Naive thymus-derived CD4-positive, alpha-beta T cell (primary cell): ENCODE measurements at regions of chr21 and their contacts with region 1.

Region 1: DNA sequence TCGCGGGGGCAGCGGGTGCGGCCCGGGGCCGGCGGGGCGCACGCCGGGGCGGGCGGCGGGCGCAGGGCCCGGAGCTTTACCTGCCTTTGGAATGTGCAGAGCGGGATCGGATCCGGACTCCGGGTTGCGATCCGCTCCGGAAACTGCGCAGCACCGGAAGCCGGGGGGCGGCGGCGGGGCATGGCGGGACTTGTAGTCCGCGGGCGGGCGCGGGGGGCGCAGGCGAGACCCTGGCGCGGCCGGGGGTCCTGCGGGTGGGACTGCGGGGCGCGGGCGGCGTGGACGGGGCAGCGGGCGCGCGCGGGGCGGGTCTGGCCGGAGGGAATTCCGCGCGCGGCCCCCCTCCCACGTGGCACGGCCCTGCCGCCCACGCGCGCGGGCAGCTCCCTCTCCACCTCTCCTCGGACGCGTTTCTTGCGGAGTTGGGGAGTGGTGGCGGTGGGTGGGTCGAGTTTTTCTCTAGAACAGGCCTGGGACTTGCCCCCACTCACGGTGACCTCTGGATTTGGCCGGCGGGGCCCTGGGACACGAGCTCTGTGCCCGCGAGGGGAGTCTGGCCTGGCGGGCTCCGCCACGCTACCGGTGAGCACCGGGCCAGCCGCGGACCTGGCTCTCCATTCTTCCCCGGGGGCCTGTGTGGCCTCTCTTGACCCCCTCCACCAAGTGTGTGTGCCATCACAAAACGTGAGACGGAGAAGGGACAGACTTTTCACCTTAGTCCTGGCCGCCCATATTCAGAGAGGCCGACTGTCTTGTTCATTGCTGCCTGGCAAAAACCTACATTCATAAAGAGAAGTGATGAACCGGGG is at the start of gene PRDM15:
- DNase-seq: peak; percentile 69 to 88 (median 77)
- ATAC-seq: peak; percentile 85
- H3K4me3 ChIP-seq: peak within 1 kb of the TSS; percentile 84
- H3K4me3 Mint-ChIP-seq: peak within 1 kb of the TSS; percentile 88 to 95 (median 92)
- H3K27ac ChIP-seq: peak within 1 kb of the TSS; percentile 85
- H3K27ac Mint-ChIP-seq: peak within 1 kb of the TSS; percentile 92 to 97 (median 95)
- H3K4me1 ChIP-seq: peaks cover 9 to 16% of the 10 kb centered on the region in 2 donors
- H3K4me1 Mint-ChIP-seq: peaks cover 20 to 35% (median 29%) of the 10 kb centered on the region in 7 donors
- H3K27me3 ChIP-seq: no peaks in the 10 kb centered on the region
- H3K27me3 Mint-ChIP-seq: no peaks in the 10 kb centered on the region
- total RNA-seq, gene PRDM15: 10.0 to 20.1 (median 15.9) TPM

Region 2: GRCh38 chr21:41361786-41362604 is 517.4 kb before region 1 on chr21 and contains the start of gene MX2:
- CTCF ChIA-PET with region 1: no interaction called
- POLR2A ChIA-PET with region 1: no interaction called
- intact Hi-C with region 1: loop called in 1 of 2 experiments (anchors 10 kb)
- DNase-seq: peak; percentile 64 to 96 (median 94)
- ATAC-seq: peak; percentile 86
- H3K4me3 ChIP-seq: peak within 1 kb of the TSS; percentile 84
- H3K4me3 Mint-ChIP-seq: peak within 1 kb of the TSS; percentile 90 to 98 (median 96)
- H3K27ac ChIP-seq: peak within 1 kb of the TSS; percentile 96
- H3K27ac Mint-ChIP-seq: peak within 1 kb of the TSS; percentile 99 to 100 (median 100)
- H3K4me1 ChIP-seq: peaks cover 21 to 38% of the 10 kb centered on the region in 2 donors
- H3K4me1 Mint-ChIP-seq: peaks cover 31 to 67% (median 60%) of the 10 kb centered on the region in 7 donors
- H3K27me3 ChIP-seq: no peaks in the 10 kb centered on the region
- H3K27me3 Mint-ChIP-seq: no peaks in the 10 kb centered on the region
- total RNA-seq, gene MX2: 84.8 to 116 (median 100) TPM

Region 3: DNA sequence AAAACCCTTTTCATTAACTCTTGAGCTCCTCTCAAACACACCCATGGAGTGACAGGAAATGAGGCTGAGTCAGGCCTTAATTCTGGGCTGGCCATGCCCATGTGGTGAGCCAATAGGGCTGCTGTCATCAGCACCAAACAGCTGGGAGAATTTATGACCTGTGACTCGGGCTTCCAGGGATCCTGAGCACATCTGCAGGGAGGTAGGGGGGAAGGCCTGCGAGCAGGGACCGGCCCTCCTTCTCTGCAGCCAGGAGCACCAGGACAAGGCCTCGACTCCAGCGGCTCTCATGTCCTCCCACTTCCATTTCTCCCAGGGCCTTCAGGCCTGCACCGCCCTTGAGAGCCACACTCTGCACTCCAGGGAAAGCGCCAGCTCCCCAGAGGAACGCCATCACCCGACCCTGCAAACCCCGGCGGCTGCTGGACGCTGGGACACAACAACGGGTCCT is 127.1 kb before region 1 on chr21:
- CTCF ChIA-PET with region 1: no interaction called
- POLR2A ChIA-PET with region 1: no interaction called
- intact Hi-C with region 1: no loop called
- DNase-seq: no peak
- ATAC-seq: no peak
- H3K4me3 ChIP-seq: no peak overlapping the region
- H3K4me3 Mint-ChIP-seq: no peak overlapping the region
- H3K27ac ChIP-seq: no peak overlapping the region
- H3K27ac Mint-ChIP-seq: no peak overlapping the region
- H3K4me1 ChIP-seq: no peaks in the 10 kb centered on the region
- H3K4me1 Mint-ChIP-seq: no peaks in the 10 kb centered on the region
- H3K27me3 ChIP-seq: no peaks in the 10 kb centered on the region
- H3K27me3 Mint-ChIP-seq: no peaks in the 10 kb centered on the region

Region 4: DNA sequence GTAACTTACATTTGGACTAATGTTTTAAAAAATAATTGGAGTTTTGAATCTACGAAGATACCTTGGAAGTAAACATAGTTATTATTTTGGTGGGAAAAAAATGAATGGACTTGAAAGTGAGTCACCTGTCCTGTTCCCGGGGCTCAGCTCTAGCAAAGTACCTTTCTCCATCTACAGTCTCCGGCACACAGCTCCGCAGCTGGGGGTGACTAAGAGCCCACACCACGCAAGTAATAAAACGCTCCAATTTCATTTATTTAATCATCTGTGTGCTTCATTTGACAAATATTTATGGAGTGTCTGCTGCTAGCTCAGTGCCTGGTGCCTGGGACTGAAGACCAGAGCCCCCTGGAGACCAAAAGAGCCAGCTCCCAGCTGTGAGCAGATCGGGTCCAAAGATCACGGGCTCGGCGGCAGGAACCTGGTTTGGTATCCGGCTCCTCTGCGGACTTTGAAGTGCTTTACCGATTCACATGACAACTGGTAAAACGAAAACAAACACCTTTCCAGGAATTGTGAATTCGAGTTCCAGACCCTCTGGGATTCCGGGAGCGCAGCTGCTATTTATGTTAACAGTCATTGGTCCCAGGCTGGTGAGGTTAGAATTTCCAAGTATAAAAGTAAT is 110.8 kb before region 1 on chr21:
- CTCF ChIA-PET with region 1: no interaction called
- POLR2A ChIA-PET with region 1: no interaction called
- intact Hi-C with region 1: loop called in 1 of 2 experiments (anchors 5 kb)
- DNase-seq: peak in 6 of 9 donors; percentile 15 to 47 (median 34)
- ATAC-seq: no peak
- H3K4me3 ChIP-seq: peak overlapping the region; percentile 64
- H3K4me3 Mint-ChIP-seq: peak overlapping the region; percentile 85 to 97 (median 87)
- H3K27ac ChIP-seq: no peak overlapping the region
- H3K27ac Mint-ChIP-seq: peak overlapping the region in 5 of 9 donors; percentile 7 to 57 (median 19)
- H3K4me1 ChIP-seq: peaks cover 11 to 31% of the 10 kb centered on the region in 2 donors
- H3K4me1 Mint-ChIP-seq: peaks cover 23 to 30% (median 24%) of the 10 kb centered on the region in 7 donors
- H3K27me3 ChIP-seq: peaks cover 8 to 19% of the 10 kb centered on the region in 2 donors
- H3K27me3 Mint-ChIP-seq: peaks cover 59 to 83% (median 64%) of the 10 kb centered on the region in 5 donors

Region 5: DNA sequence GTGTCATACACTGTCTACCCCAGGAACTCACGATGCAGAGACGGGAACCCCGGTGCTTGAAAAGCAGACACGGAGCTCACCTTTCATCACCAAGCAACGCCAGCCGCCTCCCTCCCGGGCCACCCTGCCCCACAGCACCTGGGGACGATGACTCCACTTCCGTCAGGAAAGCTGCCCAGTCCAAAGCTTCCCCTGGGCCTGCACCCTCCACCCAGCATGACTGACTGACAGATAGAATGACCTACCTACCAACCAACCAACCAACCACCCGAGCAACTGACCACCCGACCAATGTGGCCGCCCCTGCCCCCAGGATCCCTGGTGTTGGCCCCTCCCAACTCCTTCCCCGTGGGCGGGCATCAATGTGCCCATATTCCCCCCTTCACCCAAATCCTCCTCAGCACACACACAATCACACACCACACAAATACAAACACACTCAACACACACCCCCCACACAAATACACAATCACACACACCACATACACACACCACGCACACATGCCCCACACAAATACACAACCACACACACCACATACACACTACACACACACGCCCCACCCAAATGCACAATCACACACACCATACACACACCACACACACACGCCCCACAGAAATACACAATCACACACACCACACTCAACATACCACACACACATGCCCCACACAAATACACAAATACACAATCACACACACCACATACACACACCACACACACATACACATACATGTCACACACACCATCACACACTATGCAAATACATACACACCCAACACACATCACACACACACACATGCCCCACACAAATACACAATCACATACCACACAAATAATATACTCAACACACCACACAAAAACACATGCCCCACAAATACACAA is 50.7 kb before region 1 on chr21:
- CTCF ChIA-PET with region 1: no interaction called
- POLR2A ChIA-PET with region 1: no interaction called
- intact Hi-C with region 1: no loop called
- DNase-seq: no peak
- ATAC-seq: no peak
- H3K4me3 ChIP-seq: no peak overlapping the region
- H3K4me3 Mint-ChIP-seq: no peak overlapping the region
- H3K27ac ChIP-seq: no peak overlapping the region
- H3K27ac Mint-ChIP-seq: no peak overlapping the region
- H3K4me1 ChIP-seq: no peaks in the 10 kb centered on the region
- H3K4me1 Mint-ChIP-seq: peaks cover 0 to 1% (median 0%) of the 10 kb centered on the region in 7 donors
- H3K27me3 ChIP-seq: no peaks in the 10 kb centered on the region
- H3K27me3 Mint-ChIP-seq: no peaks in the 10 kb centered on the region

Region 6: DNA sequence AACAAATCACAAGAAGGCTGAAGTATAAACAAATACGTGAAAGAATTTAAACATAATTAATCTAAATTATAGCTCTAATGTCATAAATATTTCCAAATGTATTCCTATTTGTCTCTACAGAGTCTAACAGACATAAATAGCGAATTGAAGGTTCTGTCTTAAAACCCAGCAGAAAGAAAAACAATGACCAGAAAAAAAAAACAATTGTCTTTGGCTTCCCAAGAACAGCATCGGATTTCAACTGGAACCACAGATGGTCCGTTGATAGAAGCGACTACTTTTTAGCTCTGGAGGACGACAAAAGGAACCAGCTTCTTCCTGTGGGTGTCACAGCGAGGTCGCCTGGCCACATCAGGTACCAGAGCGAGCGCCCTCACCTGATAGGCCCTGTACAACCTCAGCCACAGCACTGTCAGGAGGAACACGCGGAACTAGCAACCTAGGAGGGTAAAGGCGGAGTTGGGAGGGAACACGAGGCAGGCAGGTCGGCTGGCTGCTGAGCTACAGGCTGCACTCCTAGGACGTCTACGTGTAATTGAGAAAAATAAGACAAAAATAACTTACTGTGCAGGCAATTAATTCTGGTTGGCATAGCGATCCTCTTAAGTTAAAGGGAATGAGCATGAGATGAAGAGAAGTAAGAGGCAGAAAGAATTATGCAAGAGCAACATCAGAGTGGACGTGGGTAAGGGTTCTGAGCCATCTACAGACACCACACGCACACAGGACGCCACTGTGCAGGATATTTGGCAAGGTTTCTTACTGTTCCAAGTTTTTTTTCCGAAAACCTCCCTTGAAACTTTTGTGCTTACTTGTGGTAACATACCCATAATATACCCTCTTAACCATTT is 16.5 kb after region 1 on chr21:
- CTCF ChIA-PET with region 1: interaction called, 5 read pairs
- POLR2A ChIA-PET with region 1: interaction called, 12 read pairs
- intact Hi-C with region 1: loop called in 1 of 2 experiments (anchors 1 kb)
- DNase-seq: peak in 8 of 9 donors; percentile 18 to 72 (median 58)
- ATAC-seq: peak; percentile 94
- H3K4me3 ChIP-seq: no peak overlapping the region
- H3K4me3 Mint-ChIP-seq: peak overlapping the region in 8 of 10 donors; percentile 35 to 70 (median 51)
- H3K27ac ChIP-seq: no peak overlapping the region
- H3K27ac Mint-ChIP-seq: peak overlapping the region; percentile 34 to 91 (median 71)
- H3K4me1 ChIP-seq: peaks cover 4 to 16% of the 10 kb centered on the region in 2 donors
- H3K4me1 Mint-ChIP-seq: peaks cover 9 to 35% (median 21%) of the 10 kb centered on the region in 7 donors
- H3K27me3 ChIP-seq: no peaks in the 10 kb centered on the region
- H3K27me3 Mint-ChIP-seq: no peaks in the 10 kb centered on the region

Region 7: DNA sequence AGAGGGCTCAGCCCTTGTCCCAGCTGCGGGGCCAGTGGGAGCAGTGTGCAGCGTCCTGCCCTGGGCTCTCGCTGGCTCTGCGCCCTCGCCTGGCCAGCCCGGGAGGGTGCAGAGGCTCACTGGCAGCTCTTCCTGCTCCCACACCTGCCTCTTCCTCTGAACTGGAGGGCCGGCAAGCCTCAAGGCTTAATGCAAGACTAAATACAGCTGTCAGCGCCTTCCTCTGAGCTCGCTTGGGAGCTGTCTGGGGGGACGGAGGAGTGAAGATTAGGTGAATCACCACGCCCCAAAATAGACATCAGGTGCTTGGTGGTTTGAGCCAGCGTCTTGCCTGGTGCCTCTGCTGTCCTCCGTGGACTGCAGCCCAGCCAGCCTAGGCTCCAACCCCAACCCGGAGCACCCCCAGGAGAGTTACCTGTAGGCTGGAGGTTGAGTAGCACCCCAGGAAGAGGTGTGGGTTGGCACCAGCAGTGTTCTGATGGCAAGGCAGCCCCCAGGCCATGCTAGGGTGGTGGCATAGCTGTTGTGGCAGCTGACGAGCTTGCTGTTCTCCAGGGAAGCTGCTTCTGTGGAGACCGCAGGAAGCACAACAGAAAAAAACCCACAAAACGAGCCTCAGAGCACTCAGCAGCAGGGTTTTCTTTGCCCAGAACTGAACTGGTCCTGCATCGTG is 228.6 kb after region 1 on chr21:
- CTCF ChIA-PET with region 1: interaction called, 5 read pairs
- POLR2A ChIA-PET with region 1: interaction called, 5 read pairs
- intact Hi-C with region 1: loop called (anchors 2 to 5 kb)
- DNase-seq: peak; percentile 46 to 82 (median 69)
- ATAC-seq: peak; percentile 97
- H3K4me3 ChIP-seq: peak overlapping the region; percentile 11
- H3K4me3 Mint-ChIP-seq: peak overlapping the region; percentile 34 to 84 (median 76)
- H3K27ac ChIP-seq: peak overlapping the region; percentile 38
- H3K27ac Mint-ChIP-seq: peak overlapping the region in 8 of 9 donors; percentile 11 to 82 (median 73)
- H3K4me1 ChIP-seq: peaks cover 0 to 15% of the 10 kb centered on the region in 2 donors
- H3K4me1 Mint-ChIP-seq: peaks cover 0 to 28% (median 10%) of the 10 kb centered on the region in 7 donors
- H3K27me3 ChIP-seq: no peaks in the 10 kb centered on the region
- H3K27me3 Mint-ChIP-seq: peaks cover 0 to 4% (median 0%) of the 10 kb centered on the region in 5 donors